ENCODE measurements at regions of chr11 and their contacts with region 1.

Region 1: GRCh38 chr11:18395735-18396504 is 1.6 kb downstream of the LDHA start:
- DNase-seq: peak; percentile 94
- ATAC-seq: peak; percentile 68
- H3K4me3 Mint-ChIP-seq: peak overlapping the region; percentile 95
- H3K27ac Mint-ChIP-seq: peak overlapping the region; percentile 98
- H3K4me1 Mint-ChIP-seq: peaks cover 54% of the 10 kb centered on the region
- H3K27me3 Mint-ChIP-seq: no peaks in the 10 kb centered on the region
- CTCF ChIP-seq: no peak

Region 2: GRCh38 chr11:18221274-18221876 is 174.5 kb before region 1 on chr11:
- CTCF ChIA-PET with region 1: no interaction called
- POLR2A ChIA-PET with region 1: no interaction called
- intact Hi-C with region 1: no loop called
- DNase-seq: no peak
- ATAC-seq: no peak
- H3K4me3 Mint-ChIP-seq: no peak overlapping the region
- H3K27ac Mint-ChIP-seq: no peak overlapping the region
- H3K4me1 Mint-ChIP-seq: no peaks in the 10 kb centered on the region
- H3K27me3 Mint-ChIP-seq: peaks cover 10% of the 10 kb centered on the region
- CTCF ChIP-seq: no peak

Region 3: GRCh38 chr11:18253231-18253630 is 142.7 kb before region 1 on chr11:
- CTCF ChIA-PET with region 1: no interaction called
- POLR2A ChIA-PET with region 1: no interaction called
- intact Hi-C with region 1: no loop called
- DNase-seq: no peak
- ATAC-seq: no peak
- H3K4me3 Mint-ChIP-seq: no peak overlapping the region
- H3K27ac Mint-ChIP-seq: no peak overlapping the region
- H3K4me1 Mint-ChIP-seq: no peaks in the 10 kb centered on the region
- H3K27me3 Mint-ChIP-seq: no peaks in the 10 kb centered on the region
- CTCF ChIP-seq: no peak

Region 4: DNA sequence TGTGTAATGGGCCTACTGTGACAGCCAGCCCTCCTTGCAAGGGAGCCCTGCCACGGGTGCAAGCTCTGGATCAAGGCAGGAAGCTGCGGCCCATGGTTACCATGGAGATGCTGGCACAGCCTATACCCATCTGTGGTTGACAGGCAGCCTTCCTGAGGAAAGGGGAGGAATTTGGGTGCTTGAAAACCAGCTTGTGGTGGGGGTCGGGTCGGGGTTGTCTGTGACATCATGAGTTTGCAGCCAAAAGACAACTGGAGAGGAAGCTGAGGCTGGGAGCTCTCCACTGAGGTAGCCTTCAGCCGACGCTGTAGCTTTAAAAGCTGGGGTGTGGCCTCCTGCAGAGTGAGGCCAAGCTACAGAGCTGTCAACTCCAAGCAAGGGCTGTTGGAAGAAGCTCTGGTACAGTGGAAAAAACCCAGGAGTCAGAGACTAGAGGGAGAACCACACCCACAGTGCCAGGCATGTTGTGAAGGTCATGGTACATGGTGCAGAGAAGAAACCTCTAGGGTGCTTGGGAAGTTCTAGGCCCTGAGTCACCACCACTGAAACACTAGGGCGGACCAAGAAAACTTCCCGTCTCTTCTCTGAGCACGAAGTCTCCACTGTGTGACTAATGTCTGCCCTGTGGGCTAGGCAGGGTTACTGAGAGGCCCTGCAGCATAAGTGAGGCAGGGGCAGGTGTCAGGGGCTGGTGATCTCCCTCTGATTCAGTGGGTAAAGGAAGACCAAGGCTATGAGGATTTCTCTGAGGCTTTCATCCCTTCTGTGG is 12.3 kb before region 1 on chr11:
- CTCF ChIA-PET with region 1: interaction called, 32 read pairs
- POLR2A ChIA-PET with region 1: interaction called, 128 read pairs
- intact Hi-C with region 1: loop called (anchors 1 kb)
- DNase-seq: peak; percentile 92
- ATAC-seq: peak; percentile 95
- H3K4me3 Mint-ChIP-seq: peak overlapping the region; percentile 66
- H3K27ac Mint-ChIP-seq: peak overlapping the region; percentile 100
- H3K4me1 Mint-ChIP-seq: peaks cover 36% of the 10 kb centered on the region
- H3K27me3 Mint-ChIP-seq: no peaks in the 10 kb centered on the region
- CTCF ChIP-seq: no peak

Region 5: GRCh38 chr11:18408558-18409242 is 12.8 kb after region 1 on chr11:
- CTCF ChIA-PET with region 1: interaction called, 4 read pairs
- POLR2A ChIA-PET with region 1: interaction called, 83 read pairs
- intact Hi-C with region 1: no loop called
- DNase-seq: peak; percentile 43
- ATAC-seq: peak; percentile 30
- H3K4me3 Mint-ChIP-seq: no peak overlapping the region
- H3K27ac Mint-ChIP-seq: no peak overlapping the region
- H3K4me1 Mint-ChIP-seq: peaks cover 12% of the 10 kb centered on the region
- H3K27me3 Mint-ChIP-seq: no peaks in the 10 kb centered on the region
- CTCF ChIP-seq: no peak

Region 6: GRCh38 chr11:18526521-18527296 is 130.8 kb after region 1 on chr11 and contains the start of gene TSG101:
- CTCF ChIA-PET with region 1: no interaction called
- POLR2A ChIA-PET with region 1: interaction called, 23 read pairs
- intact Hi-C with region 1: no loop called
- DNase-seq: peak; percentile 95
- ATAC-seq: peak; percentile 89
- H3K4me3 Mint-ChIP-seq: peak within 1 kb of the TSS; percentile 90
- H3K27ac Mint-ChIP-seq: peak within 1 kb of the TSS; percentile 99
- H3K4me1 Mint-ChIP-seq: peaks cover 50% of the 10 kb centered on the region
- H3K27me3 Mint-ChIP-seq: no peaks in the 10 kb centered on the region
- CTCF ChIP-seq: no peak
- total RNA-seq, gene TSG101: 34.0 to 37.4 TPM

Region 7: GRCh38 chr11:18634140-18635032 is 238.5 kb after region 1 on chr11 and contains the start of gene SPTY2D1:
- CTCF ChIA-PET with region 1: no interaction called
- POLR2A ChIA-PET with region 1: interaction called, 16 read pairs
- intact Hi-C with region 1: no loop called
- DNase-seq: peak; percentile 100
- ATAC-seq: peak; percentile 98
- H3K4me3 Mint-ChIP-seq: peak within 1 kb of the TSS; percentile 89
- H3K27ac Mint-ChIP-seq: peak within 1 kb of the TSS; percentile 97
- H3K4me1 Mint-ChIP-seq: peaks cover 21% of the 10 kb centered on the region
- H3K27me3 Mint-ChIP-seq: no peaks in the 10 kb centered on the region
- CTCF ChIP-seq: no peak
- total RNA-seq, gene SPTY2D1: 21.3 TPM